HEK293 (cell line): ENCODE measurements at regions of chr19 and their contacts with region 1.

Region 1: DNA sequence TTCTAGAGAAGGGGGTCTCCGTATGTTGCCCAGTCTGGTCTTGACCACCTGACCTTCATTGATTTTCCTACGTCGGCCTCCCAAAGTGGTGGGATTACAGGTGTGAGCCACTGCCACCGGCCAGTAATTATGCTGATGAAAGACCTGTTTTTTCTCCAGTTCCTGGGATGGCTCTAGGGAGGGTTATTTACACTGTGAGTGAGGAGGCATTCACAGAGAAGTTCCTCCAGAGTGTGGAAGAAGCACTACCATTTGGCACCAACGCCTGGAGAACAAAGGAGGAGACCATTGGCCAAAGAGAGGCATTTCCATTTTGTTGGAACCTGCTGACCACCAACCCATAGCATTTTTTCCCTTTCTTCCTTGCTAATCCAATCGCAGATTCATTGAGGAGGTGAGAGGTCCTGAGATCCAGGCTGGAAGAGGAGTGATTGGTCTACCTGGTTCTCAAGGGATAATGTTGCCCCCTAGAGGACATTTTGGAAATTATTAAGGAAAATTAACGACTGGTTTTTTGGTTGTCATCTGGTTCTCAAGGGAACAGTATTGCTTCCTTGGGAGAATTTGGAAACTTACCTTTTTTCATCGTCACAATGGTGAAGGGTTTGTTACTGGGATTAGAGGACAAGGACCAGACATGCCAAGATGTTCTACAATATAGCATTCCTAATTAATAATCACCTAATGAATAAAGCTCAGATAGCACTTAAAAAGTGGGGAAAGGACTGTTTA is 5.5 kb upstream of the SAE1 start:
- H3K4me3 ChIP-seq: no peak overlapping the region
- H3K27ac ChIP-seq: no peak overlapping the region
- H3K4me1 ChIP-seq: no peaks in the 10 kb centered on the region
- CTCF ChIP-seq: peak; percentile 44; the same call in 1 of the 2 replicates

Region 2: DNA sequence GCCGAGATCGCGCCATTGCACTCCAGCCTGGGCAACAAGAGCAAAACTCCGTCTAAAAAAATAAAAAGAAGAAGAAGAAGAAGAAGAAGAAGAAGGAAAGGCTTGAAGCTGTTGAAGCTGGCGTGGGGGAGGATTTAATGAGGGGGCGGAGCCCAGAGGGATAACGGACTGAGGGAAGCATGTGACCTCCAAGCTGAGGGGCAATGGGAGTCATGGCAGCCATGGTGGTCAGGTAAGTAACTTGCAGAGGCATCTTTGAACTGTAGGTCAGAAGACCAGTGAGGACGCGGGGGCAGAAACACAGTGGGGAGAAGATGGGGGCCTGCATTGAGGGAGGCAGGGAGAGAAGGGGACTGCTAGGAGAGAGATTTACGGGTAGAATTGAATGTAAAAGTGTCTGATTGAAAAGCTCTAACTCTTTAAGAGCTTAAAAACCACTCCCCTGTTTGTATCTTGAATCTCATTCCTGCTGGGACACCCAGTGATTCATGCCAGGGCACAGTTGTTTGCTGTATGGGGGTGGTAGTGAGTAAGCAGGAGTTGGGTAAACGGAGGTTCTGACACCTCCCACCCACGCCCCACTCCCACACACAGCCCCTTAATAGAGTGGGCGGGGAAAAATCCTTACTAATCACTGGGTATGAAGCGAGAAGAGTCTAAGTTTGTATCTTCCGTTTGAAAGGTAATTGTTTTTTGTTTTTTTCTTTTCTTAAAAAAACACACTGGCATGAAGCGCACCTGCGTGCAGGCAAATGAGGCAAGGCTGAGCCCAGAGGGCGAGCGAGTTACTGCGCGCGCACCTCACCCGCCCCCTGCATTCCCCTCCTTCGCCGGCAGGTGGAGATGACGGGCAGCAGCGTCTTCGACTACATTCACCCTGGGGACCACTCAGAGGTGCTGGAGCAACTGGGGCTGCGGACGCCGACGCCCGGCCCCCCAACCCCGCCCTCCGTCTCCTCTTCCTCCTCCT is 89.7 kb before region 1 on chr19:
- CTCF ChIA-PET with region 1: interaction called, 13 read pairs
- POLR2A ChIA-PET with region 1: no interaction called
- H3K4me3 ChIP-seq: peak overlapping the region; percentile 40
- H3K27ac ChIP-seq: peak overlapping the region; percentile 80
- H3K4me1 ChIP-seq: peaks cover 17% of the 10 kb centered on the region
- CTCF ChIP-seq: peak; percentile 97

Region 3: GRCh38 chr19:47075179-47075810 is 49.8 kb before region 1 on chr19:
- CTCF ChIA-PET with region 1: interaction called, 69 read pairs
- POLR2A ChIA-PET with region 1: interaction called, 5 read pairs
- H3K4me3 ChIP-seq: no peak overlapping the region
- H3K27ac ChIP-seq: no peak overlapping the region
- H3K4me1 ChIP-seq: no peaks in the 10 kb centered on the region
- CTCF ChIP-seq: no peak

Region 4: DNA sequence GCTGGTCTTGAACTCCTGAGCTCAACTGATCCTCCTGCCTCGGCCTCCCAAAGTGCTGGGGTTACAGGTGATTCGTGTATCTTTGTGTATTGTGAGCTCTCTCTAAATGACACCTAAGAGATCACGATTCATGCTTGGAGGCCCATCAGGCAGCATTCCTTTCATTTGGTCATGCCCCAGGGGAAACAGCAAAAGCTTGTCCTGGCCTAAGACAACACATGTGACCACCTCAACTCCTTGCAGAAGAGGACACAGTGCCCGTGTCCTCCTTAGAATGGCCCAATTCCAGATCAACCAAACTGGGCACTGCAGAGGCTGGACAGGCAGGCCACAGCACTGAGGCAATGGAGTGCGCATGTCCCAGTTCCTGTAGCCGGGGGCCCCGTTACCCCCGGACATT is 44.0 kb before region 1 on chr19:
- CTCF ChIA-PET with region 1: interaction called, 69 read pairs
- POLR2A ChIA-PET with region 1: interaction called, 5 read pairs
- H3K4me3 ChIP-seq: no peak overlapping the region
- H3K27ac ChIP-seq: peak overlapping the region; percentile 37; the same call in 1 of the 2 replicates
- H3K4me1 ChIP-seq: no peaks in the 10 kb centered on the region
- CTCF ChIP-seq: no peak